IMR-90 (cell line): ENCODE measurements at regions of chr10 and their contacts with region 1.

Region 1: GRCh38 chr10:70363971-70364771 is 18.3 kb downstream of the LRRC20 start:
- DNase-seq: peak; percentile 99
- ATAC-seq: peak; percentile 92
- H3K4me3 ChIP-seq: no peak overlapping the region
- H3K27ac ChIP-seq: peak overlapping the region; percentile 97
- H3K4me1 ChIP-seq: peaks cover 12% of the 10 kb centered on the region
- H3K27me3 ChIP-seq: no peaks in the 10 kb centered on the region
- CTCF ChIP-seq: peak; percentile 97
- POLR2A ChIP-seq: peak; percentile 66
- RAD21 ChIP-seq: peak; percentile 100

Region 2: GRCh38 chr10:70132098-70133029 is 231.8 kb before region 1 on chr10 and contains the start of gene AIFM2:
- CTCF ChIA-PET with region 1: no interaction called
- POLR2A ChIA-PET with region 1: no interaction called
- dilution Hi-C with region 1: no loop called
- in situ Hi-C with region 1: loop called (anchors 10 kb)
- intact Hi-C with region 1: no loop called
- DNase-seq: peak; percentile 61
- ATAC-seq: peak; percentile 81
- H3K4me3 ChIP-seq: peak within 1 kb of the TSS; percentile 64
- H3K27ac ChIP-seq: peak within 1 kb of the TSS; percentile 66
- H3K4me1 ChIP-seq: peaks cover 17% of the 10 kb centered on the region
- H3K27me3 ChIP-seq: no peaks in the 10 kb centered on the region
- CTCF ChIP-seq: 0 out of 2 replicates have a peak, but pooled peaks have one; percentile 5
- POLR2A ChIP-seq: peak; percentile 49; the same call in 1 of the 2 replicates
- RAD21 ChIP-seq: no peak
- total RNA-seq, gene AIFM2: 1.7 and 2.0 TPM in 2 replicates

Region 3: GRCh38 chr10:70146489-70147258 is 217.5 kb before region 1 on chr10 and contains the start of gene TYSND1:
- CTCF ChIA-PET with region 1: interaction called, 5 read pairs
- POLR2A ChIA-PET with region 1: no interaction called
- dilution Hi-C with region 1: no loop called
- in situ Hi-C with region 1: no loop called
- intact Hi-C with region 1: loop called (anchors 1 kb)
- DNase-seq: peak; percentile 98
- ATAC-seq: peak; percentile 92
- H3K4me3 ChIP-seq: peak within 1 kb of the TSS; percentile 49
- H3K27ac ChIP-seq: peak within 1 kb of the TSS; percentile 76
- H3K4me1 ChIP-seq: peaks cover 11% of the 10 kb centered on the region
- H3K27me3 ChIP-seq: no peaks in the 10 kb centered on the region
- CTCF ChIP-seq: peak; percentile 85
- POLR2A ChIP-seq: peak; percentile 94
- RAD21 ChIP-seq: peak; percentile 63
- total RNA-seq, gene TYSND1: 2.8 and 2.9 TPM in 2 replicates

Region 4: GRCh38 chr10:70221030-70221429 is 143.1 kb before region 1 on chr10:
- CTCF ChIA-PET with region 1: interaction called, 61 read pairs
- POLR2A ChIA-PET with region 1: no interaction called
- dilution Hi-C with region 1: no loop called
- in situ Hi-C with region 1: no loop called
- intact Hi-C with region 1: loop called (anchors 1 kb)
- DNase-seq: no peak
- ATAC-seq: no peak
- H3K4me3 ChIP-seq: no peak overlapping the region
- H3K27ac ChIP-seq: no peak overlapping the region
- H3K4me1 ChIP-seq: peaks cover 1% of the 10 kb centered on the region; the same call in 1 of the 2 replicates
- H3K27me3 ChIP-seq: no peaks in the 10 kb centered on the region
- CTCF ChIP-seq: no peak
- POLR2A ChIP-seq: no peak
- RAD21 ChIP-seq: no peak

Region 5: GRCh38 chr10:70233109-70233938 is 130.8 kb before region 1 on chr10 and contains the start of gene PPA1:
- CTCF ChIA-PET with region 1: interaction called, 6 read pairs
- POLR2A ChIA-PET with region 1: no interaction called
- dilution Hi-C with region 1: no loop called
- in situ Hi-C with region 1: loop called (anchors 5 kb)
- intact Hi-C with region 1: loop called (anchors 1 kb)
- DNase-seq: peak; percentile 91
- ATAC-seq: peak; percentile 99
- H3K4me3 ChIP-seq: peak within 1 kb of the TSS; percentile 76
- H3K27ac ChIP-seq: peak within 1 kb of the TSS; percentile 47
- H3K4me1 ChIP-seq: peaks cover 2% of the 10 kb centered on the region; the same call in 1 of the 2 replicates
- H3K27me3 ChIP-seq: no peaks in the 10 kb centered on the region
- CTCF ChIP-seq: 0 out of 2 replicates have a peak, but pooled peaks have one; percentile 14
- POLR2A ChIP-seq: peak; percentile 72
- RAD21 ChIP-seq: no peak
- total RNA-seq, gene PPA1: 102 and 211 TPM in 2 replicates

Region 6: DNA sequence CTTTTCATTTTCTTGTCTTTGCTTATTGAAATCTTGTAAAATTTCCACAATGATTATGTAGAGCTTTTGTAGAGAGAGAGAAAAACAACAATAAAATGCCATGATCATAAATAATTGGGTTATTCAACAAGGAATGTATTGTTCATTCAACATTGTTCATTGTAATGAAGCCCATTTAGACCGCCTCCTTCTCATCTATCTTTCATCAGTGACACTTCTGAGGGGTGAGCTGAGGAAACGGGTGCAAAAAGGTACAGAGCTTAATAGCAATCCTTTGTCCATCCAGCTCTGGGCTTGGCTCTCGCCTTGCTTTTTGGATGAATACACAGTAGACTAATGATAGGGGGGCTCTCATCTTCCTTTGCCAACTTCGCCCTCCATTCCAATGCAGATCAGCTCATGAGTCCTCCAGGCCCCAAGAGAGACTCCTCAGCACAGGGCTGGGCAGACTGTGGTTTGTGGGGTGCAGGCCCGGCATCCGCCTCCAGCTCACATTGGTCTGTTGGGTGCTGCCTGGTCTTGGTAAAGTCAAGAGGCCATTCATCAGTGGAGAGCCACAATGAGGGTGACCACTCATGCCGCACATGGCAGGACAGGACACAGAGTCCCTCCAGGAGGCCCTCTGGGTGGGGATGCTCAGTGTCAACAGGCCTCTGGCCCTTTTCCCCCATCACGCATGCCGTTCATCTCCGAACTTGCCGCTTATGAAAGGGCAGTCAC is 113.0 kb before region 1 on chr10:
- CTCF ChIA-PET with region 1: no interaction called
- POLR2A ChIA-PET with region 1: no interaction called
- dilution Hi-C with region 1: no loop called
- in situ Hi-C with region 1: no loop called
- intact Hi-C with region 1: no loop called
- DNase-seq: no peak
- ATAC-seq: no peak
- H3K4me3 ChIP-seq: no peak overlapping the region
- H3K27ac ChIP-seq: no peak overlapping the region
- H3K4me1 ChIP-seq: peaks cover 1% of the 10 kb centered on the region; the same call in 1 of the 2 replicates
- H3K27me3 ChIP-seq: peaks cover 38% of the 10 kb centered on the region
- CTCF ChIP-seq: no peak
- POLR2A ChIP-seq: no peak
- RAD21 ChIP-seq: no peak

Region 7: GRCh38 chr10:70267161-70267933 is 96.8 kb before region 1 on chr10:
- CTCF ChIA-PET with region 1: interaction called, 3 read pairs
- POLR2A ChIA-PET with region 1: no interaction called
- dilution Hi-C with region 1: no loop called
- in situ Hi-C with region 1: no loop called
- intact Hi-C with region 1: loop called (anchors 2 kb)
- DNase-seq: peak; percentile 98
- ATAC-seq: peak; percentile 97
- H3K4me3 ChIP-seq: no peak overlapping the region
- H3K27ac ChIP-seq: peak overlapping the region; percentile 63; the same call in 1 of the 2 replicates
- H3K4me1 ChIP-seq: peaks cover 11% of the 10 kb centered on the region
- H3K27me3 ChIP-seq: no peaks in the 10 kb centered on the region
- CTCF ChIP-seq: 0 out of 2 replicates have a peak, but pooled peaks have one; percentile 14
- POLR2A ChIP-seq: no peak
- RAD21 ChIP-seq: no peak